Cardiac septum (tissue), 1 donor: ENCODE measurements at regions of chr15 and their contacts with region 1.

Region 1: DNA sequence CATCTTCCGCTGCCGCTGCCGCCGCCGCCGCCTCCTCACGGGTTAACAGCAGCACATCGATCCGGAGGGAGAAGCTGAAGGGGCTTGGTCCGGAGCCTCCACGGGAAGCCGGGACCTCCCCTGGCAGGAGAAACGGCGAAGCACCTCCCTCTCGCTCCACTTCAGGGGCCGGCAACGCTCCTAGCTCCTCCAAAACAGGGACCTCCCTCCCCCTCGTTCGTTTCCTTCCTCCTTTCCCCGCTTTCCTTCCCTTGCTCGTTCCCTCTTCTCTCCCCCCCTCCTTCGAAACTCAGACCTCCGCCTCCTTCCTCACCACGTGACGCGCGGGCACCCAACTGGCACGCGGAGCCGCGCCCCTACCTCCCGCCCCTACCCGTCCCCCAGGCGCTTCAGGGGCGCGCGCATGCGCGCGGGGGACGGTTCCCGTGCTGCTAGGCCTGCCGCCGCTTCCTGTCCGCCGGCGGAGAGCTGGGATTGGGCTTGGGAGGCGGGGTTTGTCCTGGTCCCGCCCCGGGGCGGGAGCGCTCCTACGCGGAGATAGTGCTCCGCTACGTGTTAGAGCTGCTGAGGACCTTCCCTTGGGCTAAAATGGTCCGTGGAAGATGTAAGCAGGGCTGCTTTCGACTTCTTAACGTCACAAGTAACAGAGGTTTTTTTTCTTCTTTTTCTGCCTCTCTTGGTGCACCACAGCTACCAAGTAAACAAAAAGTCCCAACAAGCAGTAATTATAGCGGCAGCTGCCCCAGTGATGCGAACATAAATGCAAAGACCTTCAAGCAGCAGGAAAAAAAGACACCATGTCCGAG is at the start of gene ADAM10:
- DNase-seq: peak; percentile 100
- total RNA-seq, gene ADAM10: 85.9 TPM

Region 2: GRCh38 chr15:58227706-58228543 is 521.8 kb before region 1 on chr15:
- intact Hi-C with region 1: loop called (anchors 5 kb)
- DNase-seq: peak; percentile 86

Region 3: DNA sequence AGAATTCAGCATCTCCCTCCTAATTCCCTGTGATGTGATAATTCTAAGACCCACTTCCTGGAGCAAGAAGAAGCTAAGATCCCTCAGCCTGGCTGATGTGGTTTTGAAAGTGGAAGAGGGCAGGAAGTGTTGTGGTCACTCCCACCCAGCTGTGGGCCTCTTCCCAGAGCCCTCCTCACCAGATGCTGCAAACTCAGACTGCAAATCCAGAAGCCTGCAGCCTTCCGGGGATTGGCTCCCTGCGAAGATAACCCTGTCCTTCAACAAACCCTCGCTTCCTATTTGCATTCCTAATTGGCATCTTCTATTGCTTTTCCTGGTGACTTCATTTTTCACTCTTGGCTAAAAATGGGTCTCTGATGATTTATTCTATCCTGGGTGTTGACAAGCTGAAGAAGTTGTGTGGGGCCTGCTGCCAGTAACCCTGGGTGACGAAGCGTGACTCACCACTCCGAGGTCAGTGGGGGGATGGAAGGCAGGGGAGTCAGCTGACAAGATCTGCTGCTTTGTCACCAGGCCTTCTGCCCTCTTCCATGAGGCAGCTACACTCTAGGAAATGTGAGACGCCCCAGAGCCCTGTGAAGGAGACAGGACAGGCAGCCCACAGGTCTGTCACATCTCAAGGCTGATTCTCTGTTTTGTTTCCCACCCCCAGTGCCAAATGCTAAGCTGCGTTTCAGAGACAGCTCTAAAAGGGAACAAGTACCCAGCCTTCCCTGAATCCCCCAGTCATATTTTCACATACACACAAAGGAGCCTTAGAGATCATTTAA is 417.6 kb before region 1 on chr15:
- intact Hi-C with region 1: loop called (anchors 2 kb)
- DNase-seq: peak; percentile 98

Region 4: DNA sequence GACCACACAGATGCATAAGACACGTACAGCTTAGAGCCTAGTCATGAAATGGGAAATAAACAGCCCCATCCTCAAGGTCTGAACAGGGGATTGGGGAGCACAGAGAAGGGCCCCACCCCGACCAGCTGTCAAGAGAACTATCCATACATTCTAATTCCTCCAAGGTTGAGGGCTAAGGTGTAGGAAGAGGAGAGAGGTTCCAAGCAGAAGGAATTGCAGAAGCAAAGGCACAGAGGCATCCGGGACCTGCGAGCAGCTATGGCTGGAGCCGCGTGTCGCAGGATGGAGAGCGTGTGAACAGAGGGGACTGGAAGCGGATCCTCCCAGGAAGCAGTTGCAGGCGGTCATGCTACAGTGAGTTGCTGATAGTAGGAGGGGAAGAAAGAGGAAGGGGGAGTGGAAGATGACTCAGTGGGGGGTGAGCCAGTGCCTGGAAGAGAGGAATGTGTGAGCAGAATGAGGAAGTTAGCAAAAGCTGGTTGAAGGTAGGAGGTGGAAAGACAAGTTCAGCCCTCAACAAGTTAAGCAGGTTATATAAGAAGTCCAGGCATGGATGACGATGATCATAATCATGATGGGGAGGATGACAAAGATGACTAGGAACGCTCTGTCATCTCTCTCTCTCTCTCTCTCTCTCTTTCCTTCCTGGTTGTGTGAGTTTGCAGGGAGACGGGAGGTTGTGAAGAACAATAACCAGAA is 228.3 kb before region 1 on chr15:
- intact Hi-C with region 1: loop called (anchors 10 kb)
- DNase-seq: peak; percentile 90

Region 5: DNA sequence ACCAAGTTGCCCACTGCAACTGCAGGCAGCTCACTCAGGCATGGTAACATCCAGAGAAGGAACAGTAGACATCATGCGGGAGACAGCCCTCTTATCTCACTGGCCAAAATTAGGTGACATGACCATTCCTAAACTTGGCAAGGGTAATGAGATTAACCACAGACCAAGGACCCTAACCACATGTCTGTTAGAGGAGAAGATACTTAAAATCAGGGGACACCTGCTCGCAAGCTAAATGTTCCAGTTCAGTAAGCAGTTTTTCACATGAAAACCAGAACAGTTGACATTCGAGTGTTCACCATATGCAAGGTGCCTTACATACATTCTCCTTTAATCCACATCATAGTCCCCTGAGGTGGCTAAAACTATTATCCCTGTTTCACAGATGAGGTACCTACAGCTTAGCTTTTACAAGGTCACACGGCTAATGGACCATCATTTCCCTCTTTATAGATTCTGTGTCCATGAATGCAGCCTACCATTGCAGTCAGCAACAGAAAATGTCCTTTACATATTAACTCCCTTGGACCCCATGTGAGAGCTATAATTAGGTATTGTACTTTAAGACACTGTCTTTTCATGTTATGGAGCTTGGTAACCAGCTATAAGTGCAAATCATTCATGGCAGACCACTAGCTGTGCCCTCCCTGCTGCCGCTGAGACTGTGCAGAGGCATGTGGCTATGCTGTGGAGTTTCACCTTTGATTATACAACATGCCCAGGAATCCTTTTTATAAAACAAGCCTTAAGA is 163.9 kb before region 1 on chr15:
- intact Hi-C with region 1: no loop called
- DNase-seq: no peak

Region 6: DNA sequence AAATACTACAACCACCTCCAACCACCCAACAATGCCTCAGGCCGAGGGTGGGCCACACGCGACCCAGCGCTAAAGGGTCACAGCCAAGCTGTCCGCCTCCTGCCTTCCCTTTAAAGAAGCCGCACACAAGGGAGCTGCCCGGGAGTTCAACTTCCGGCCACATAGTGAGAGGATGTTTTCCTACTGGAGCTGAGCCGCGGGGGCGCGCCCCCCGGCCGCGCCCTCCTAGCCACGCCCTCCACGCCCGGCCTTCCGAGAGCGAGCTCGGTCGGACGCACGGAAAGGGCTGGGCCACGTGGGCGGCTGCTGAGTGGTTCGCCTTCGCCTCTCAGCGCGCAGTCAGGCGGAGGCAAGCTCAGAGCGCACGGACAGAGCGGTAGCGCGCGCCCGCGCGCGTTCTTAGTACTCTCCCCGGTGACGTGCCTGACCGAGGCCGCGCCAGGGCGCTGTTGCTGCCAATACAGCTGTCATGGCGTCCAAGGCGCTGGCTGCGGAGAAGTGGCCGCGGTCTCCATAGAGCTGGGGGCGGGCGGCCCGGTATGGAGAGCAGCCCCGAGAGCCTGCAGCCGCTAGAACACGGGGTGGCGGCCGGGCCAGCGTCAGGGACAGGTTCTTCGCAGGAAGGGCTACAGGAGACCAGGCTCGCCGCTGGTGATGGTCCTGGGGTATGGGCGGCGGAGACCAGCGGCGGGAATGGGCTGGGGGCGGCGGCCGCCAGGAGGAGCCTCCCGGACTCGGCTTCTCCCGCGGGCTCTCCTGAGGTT is 21.3 kb after region 1 on chr15 and contains the start of gene MINDY2:
- intact Hi-C with region 1: loop called (anchors 1 kb)
- DNase-seq: peak; percentile 99
- total RNA-seq, gene MINDY2: 33.4 TPM